ENCODE measurements at regions of chr1 and their contacts with region 1.

Region 1: GRCh38 chr1:45543581-45544417 is 6.8 kb upstream of the AKR1A1 start:
- DNase-seq: peak; percentile 89
- H3K4me3 ChIP-seq: no peak overlapping the region
- H3K27ac ChIP-seq: peak overlapping the region; percentile 42
- H3K4me1 ChIP-seq: peaks cover 27% of the 10 kb centered on the region
- H3K27me3 ChIP-seq: no peaks in the 10 kb centered on the region
- CTCF ChIP-seq: no peak
- POLR2A ChIP-seq: no peak

Region 2: DNA sequence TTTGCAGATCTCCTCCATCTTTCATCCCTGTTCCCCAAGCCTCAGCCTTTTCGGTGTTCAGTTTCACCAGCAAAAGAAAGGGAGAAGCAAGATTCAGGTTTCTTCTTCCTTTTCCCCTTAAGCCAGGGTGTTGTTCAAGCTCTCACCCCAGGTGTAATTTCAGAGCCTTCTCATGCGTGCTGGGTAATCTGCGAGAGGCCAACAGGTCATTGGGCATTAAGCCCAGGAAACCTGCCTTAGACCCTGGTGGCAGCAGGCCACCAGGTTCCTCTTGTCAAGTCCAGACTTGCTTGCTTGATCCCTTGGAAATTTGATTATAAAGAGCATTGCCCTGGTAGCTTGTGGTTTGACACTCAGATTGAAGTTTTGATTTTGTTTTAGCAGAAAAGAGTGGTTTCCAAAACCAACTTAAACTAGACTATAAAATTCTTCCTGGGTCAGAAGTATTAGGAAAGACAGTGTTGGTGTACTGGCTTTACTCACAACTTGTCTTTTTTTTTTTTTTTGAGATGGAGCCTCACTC is 13.7 kb after region 1 on chr1:
- CTCF ChIA-PET with region 1: interaction called, 12 read pairs
- POLR2A ChIA-PET with region 1: interaction called, 3 read pairs
- dilution Hi-C with region 1: no loop called
- intact Hi-C with region 1: no loop called
- DNase-seq: no peak
- H3K4me3 ChIP-seq: no peak overlapping the region
- H3K27ac ChIP-seq: no peak overlapping the region
- H3K4me1 ChIP-seq: no peaks in the 10 kb centered on the region
- H3K27me3 ChIP-seq: no peaks in the 10 kb centered on the region
- CTCF ChIP-seq: no peak
- POLR2A ChIP-seq: no peak

Region 3: GRCh38 chr1:45658171-45658570 is 114.4 kb after region 1 on chr1:
- CTCF ChIA-PET with region 1: no interaction called
- POLR2A ChIA-PET with region 1: no interaction called
- dilution Hi-C with region 1: no loop called
- intact Hi-C with region 1: no loop called
- DNase-seq: no peak
- H3K4me3 ChIP-seq: no peak overlapping the region
- H3K27ac ChIP-seq: no peak overlapping the region
- H3K4me1 ChIP-seq: no peaks in the 10 kb centered on the region
- H3K27me3 ChIP-seq: no peaks in the 10 kb centered on the region
- CTCF ChIP-seq: no peak
- POLR2A ChIP-seq: no peak

Region 4: GRCh38 chr1:46742069-46742468 is 1198.3 kb after region 1 on chr1:
- CTCF ChIA-PET with region 1: no interaction called
- POLR2A ChIA-PET with region 1: no interaction called
- dilution Hi-C with region 1: no loop called
- intact Hi-C with region 1: no loop called
- DNase-seq: no peak
- H3K4me3 ChIP-seq: no peak overlapping the region
- H3K27ac ChIP-seq: no peak overlapping the region
- H3K4me1 ChIP-seq: no peaks in the 10 kb centered on the region
- H3K27me3 ChIP-seq: peaks cover 11 to 26% of the 10 kb centered on the region in 2 experiments
- CTCF ChIP-seq: no peak
- POLR2A ChIP-seq: no peak